ENCODE measurements at regions of chr1 and their contacts with region 1.

Region 1: DNA sequence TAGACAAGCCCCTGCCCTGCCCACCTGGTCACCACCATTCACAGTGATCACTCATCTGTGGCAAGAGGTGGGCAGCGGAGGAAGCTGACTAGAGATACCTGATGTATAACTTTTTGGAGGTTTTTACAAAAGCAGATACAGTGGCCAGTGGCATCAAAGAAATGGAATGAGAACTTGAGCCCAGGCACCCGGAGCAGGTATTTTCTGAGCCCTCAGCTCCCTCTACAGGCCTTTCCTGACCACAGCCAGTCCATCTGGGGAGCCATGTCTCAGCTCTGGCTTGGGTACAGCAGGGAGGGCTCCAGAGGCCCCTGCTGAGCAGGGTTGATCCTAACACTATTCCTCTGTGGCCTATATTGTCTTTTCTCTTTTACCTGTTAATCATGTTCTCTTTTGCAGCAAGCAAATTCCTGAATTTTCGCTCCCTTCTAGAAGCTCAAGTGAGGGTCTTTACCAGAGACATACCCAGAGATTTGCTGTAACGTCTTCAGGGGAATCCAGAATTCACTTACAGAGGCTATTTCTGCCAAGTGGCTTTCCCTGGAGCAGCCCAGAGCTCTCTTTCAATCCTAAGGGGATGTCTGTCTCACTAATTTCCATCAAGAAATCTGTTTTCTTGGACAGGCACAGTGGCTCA is 27.3 kb downstream of the GPR157 start:
- DNase-seq: peak; percentile 82
- H3K4me3 Mint-ChIP-seq: no peak overlapping the region
- H3K27ac Mint-ChIP-seq: no peak overlapping the region
- H3K4me1 Mint-ChIP-seq: no peaks in the 10 kb centered on the region
- H3K27me3 Mint-ChIP-seq: no peaks in the 10 kb centered on the region

Region 2: GRCh38 chr1:8913111-8913856 is 188.3 kb before region 1 on chr1:
- intact Hi-C with region 1: loop called (anchors 5 kb)
- DNase-seq: no peak
- H3K4me3 Mint-ChIP-seq: no peak overlapping the region
- H3K27ac Mint-ChIP-seq: no peak overlapping the region
- H3K4me1 Mint-ChIP-seq: peaks cover 27% of the 10 kb centered on the region
- H3K27me3 Mint-ChIP-seq: no peaks in the 10 kb centered on the region

Region 3: DNA sequence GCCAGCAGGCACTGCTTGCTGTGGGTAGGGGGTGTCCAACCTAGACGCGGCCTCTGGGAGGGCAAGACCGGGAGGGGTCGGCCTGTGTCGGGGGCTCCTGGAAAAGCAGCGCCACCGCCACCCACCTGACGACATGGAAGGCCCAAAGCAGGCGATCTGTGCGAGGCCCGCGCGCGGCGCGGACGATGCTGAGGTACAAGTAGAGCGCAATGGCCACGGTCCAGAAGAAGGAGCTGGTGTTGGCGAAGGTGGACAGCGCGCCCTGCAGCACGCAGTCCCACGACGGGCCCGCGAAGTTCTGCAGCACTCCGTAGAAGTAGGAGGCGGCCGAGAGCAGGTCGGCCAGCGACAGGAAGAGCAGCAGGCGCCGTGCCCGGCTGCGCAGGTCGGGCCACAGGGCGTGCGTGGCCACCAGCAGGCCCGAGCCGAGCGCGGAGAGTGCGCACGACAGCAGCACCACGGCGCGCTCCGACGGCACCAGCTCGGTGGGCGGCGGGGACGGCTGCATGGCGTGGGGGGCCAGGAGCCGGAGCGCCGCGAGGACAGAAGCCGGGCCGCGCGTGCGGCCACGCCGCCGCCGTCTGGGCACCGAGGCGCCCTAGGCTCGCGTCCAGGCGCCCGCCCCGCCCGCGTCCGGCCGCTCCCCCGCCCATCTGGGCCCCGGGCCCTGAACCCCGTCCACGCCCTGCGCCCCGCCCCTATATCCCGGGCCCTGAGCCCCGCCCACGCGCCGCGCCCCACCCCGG is 27.1 kb after region 1 on chr1 and contains the start of gene GPR157:
- intact Hi-C with region 1: no loop called
- DNase-seq: peak; percentile 92
- H3K4me3 Mint-ChIP-seq: peak within 1 kb of the TSS; percentile 90
- H3K27ac Mint-ChIP-seq: peak within 1 kb of the TSS; percentile 84
- H3K4me1 Mint-ChIP-seq: peaks cover 28% of the 10 kb centered on the region
- H3K27me3 Mint-ChIP-seq: peaks cover 18% of the 10 kb centered on the region
- total RNA-seq, gene GPR157: 2.1 and 4.6 TPM in 2 replicates

Measured in activated CD4-positive, alpha-beta T cell treated with anti-CD3 and anti-CD28 coated beads, Interleukin-2, amount 10 ng/mL, durations not matched to agents 24 days and 14 days (primary cell).